Activated naive CD4-positive, alpha-beta T cell treated with anti-CD3 and anti-CD28 coated beads for 36 hours (primary cell): ENCODE measurements at regions of chr2 and their contacts with region 1.

Region 1: GRCh38 chr2:191150600-191151330 is at the start of gene STAT4:
- DNase-seq: peak; percentile 94
- H3K4me3 Mint-ChIP-seq: peak within 1 kb of the TSS; percentile 91
- H3K27ac Mint-ChIP-seq: peak within 1 kb of the TSS; percentile 97
- H3K4me1 Mint-ChIP-seq: peaks cover 57% of the 10 kb centered on the region
- H3K27me3 Mint-ChIP-seq: no peaks in the 10 kb centered on the region
- total RNA-seq, gene STAT4: 53.9 to 54.6 TPM

Region 2: DNA sequence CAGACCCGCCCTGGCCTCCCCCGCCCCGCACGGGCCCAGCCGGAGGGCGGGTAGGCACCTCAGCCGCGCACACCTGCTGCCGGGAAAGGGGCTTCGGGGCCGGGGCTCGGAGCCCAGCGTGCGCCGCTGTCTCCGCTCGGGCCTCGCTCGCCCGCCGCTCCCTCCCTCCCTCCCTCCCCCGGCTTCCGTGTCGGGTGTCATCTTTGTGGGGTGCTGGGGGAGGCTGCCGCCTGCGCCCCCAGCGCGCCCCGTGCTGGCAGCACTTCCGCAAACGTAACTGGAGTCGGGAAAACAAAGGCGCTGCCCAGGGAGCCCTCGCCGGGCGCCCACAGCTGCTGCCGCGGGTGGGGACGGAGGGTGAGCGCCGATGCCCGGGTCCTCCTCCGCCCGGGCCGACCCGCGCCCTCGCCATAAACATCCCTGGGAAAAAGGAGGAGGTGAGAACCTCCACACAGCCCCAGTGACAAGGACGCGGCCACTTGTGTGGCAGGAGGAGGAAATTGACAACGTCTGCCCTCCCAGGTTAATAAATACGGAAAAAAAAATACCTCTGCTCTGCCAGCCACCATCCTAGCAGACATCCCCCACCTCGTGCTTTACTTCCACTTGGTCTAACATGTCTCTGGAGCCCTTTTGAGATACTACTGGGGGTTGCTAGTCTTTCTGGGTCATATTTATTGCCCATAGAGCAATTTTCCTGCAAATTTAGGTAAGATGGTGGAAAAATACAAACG is 742.1 kb before region 1 on chr2:
- CTCF ChIA-PET with region 1: no interaction called
- intact Hi-C with region 1: loop called (anchors 10 kb)
- DNase-seq: peak; percentile 71
- H3K4me3 Mint-ChIP-seq: peak overlapping the region; percentile 84
- H3K27ac Mint-ChIP-seq: peak overlapping the region; percentile 90
- H3K4me1 Mint-ChIP-seq: peaks cover 46% of the 10 kb centered on the region
- H3K27me3 Mint-ChIP-seq: no peaks in the 10 kb centered on the region

Region 3: GRCh38 chr2:190781604-190782198 is 369.1 kb before region 1 on chr2:
- CTCF ChIA-PET with region 1: interaction called, 13 read pairs
- intact Hi-C with region 1: loop called (anchors 1 kb)
- DNase-seq: peak; percentile 77
- H3K4me3 Mint-ChIP-seq: no peak overlapping the region
- H3K27ac Mint-ChIP-seq: no peak overlapping the region
- H3K4me1 Mint-ChIP-seq: peaks cover 26% of the 10 kb centered on the region
- H3K27me3 Mint-ChIP-seq: no peaks in the 10 kb centered on the region

Region 4: GRCh38 chr2:191020221-191020741 is 130.5 kb before region 1 on chr2:
- CTCF ChIA-PET with region 1: interaction called, 4 read pairs
- intact Hi-C with region 1: loop called (anchors 1 kb)
- DNase-seq: peak; percentile 93
- H3K4me3 Mint-ChIP-seq: no peak overlapping the region
- H3K27ac Mint-ChIP-seq: no peak overlapping the region
- H3K4me1 Mint-ChIP-seq: peaks cover 36% of the 10 kb centered on the region
- H3K27me3 Mint-ChIP-seq: no peaks in the 10 kb centered on the region

Region 5: GRCh38 chr2:191051825-191052778 is 98.7 kb before region 1 on chr2:
- CTCF ChIA-PET with region 1: interaction called, 419 read pairs
- intact Hi-C with region 1: loop called (anchors 1 kb)
- DNase-seq: no peak
- H3K4me3 Mint-ChIP-seq: no peak overlapping the region
- H3K27ac Mint-ChIP-seq: no peak overlapping the region
- H3K4me1 Mint-ChIP-seq: peaks cover 19% of the 10 kb centered on the region
- H3K27me3 Mint-ChIP-seq: no peaks in the 10 kb centered on the region

Region 6: GRCh38 chr2:191114403-191114886 is 36.3 kb before region 1 on chr2:
- CTCF ChIA-PET with region 1: interaction called, 26 read pairs
- intact Hi-C with region 1: loop called (anchors 1 kb)
- DNase-seq: peak; percentile 74
- H3K4me3 Mint-ChIP-seq: peak overlapping the region; percentile 57
- H3K27ac Mint-ChIP-seq: peak overlapping the region; percentile 87
- H3K4me1 Mint-ChIP-seq: peaks cover 78% of the 10 kb centered on the region
- H3K27me3 Mint-ChIP-seq: no peaks in the 10 kb centered on the region

Region 7: GRCh38 chr2:191171708-191172355 is 21.1 kb after region 1 on chr2:
- CTCF ChIA-PET with region 1: interaction called, 28 read pairs
- intact Hi-C with region 1: no loop called
- DNase-seq: no peak
- H3K4me3 Mint-ChIP-seq: no peak overlapping the region
- H3K27ac Mint-ChIP-seq: peak overlapping the region; percentile 38
- H3K4me1 Mint-ChIP-seq: peaks cover 75% of the 10 kb centered on the region
- H3K27me3 Mint-ChIP-seq: no peaks in the 10 kb centered on the region